Esophagus muscularis mucosa (tissue), 4 donors: ENCODE measurements at regions of chr12 and their contacts with region 1.

Region 1: DNA sequence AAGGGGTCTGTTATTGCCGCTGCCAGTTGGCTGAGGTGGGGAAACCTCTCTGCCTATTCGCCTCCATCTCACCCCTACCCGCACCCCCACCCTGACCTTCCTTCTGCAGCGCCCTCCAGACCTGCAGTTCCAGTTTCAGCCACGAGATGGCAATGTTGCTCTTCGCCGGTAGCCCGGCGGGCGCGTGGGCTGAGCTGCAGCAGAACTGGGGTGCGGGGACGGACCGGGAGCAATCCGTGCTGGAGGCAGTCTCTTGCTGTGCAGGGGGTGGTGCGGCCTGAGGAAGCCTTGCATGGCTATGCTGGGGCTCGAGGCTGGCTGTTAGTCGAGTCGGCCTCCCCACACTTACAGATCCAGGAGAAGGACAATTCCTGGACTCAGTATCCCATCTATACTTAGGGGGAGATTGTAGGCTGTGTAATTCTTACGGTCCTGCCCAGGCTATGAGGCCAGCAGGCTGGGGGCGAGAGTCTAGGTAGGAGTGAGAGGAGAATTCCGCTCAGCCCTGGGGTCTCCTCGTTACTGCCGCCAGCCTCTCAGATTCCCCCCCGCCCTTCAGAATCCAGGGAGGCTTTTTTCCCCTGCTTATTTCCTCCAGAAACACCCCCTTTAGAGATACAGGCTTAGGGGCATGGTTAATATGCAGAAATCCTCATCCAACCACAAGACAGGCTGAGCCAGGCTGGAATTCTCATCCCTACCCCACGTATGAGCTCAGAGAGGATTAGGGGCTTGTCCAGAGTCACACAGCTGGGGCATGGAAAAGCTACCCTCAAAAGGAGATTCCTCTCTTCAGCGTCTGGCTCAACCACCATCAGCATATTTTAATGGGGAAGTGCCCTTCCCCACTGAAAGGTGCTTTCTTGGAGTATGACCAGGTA is 118.2 kb downstream of the AACS start:
- DNase-seq: peak; percentile 93
- H3K4me3 ChIP-seq: no peak overlapping the region
- H3K27ac ChIP-seq: no peak overlapping the region
- H3K4me1 ChIP-seq: peaks cover 20 to 39% (median 33%) of the 10 kb centered on the region in 4 donors
- H3K27me3 ChIP-seq: peaks cover 3 to 74% (median 14%) of the 10 kb centered on the region in 4 donors
- CTCF ChIP-seq: peak in 2 of 3 experiments; percentile 96 to 98
- EP300 ChIP-seq: no peak
- POLR2A ChIP-seq: no peak

Region 2: GRCh38 chr12:124940549-124941527 is 242.6 kb before region 1 on chr12:
- intact Hi-C with region 1: no loop called
- DNase-seq: peak; percentile 98
- H3K4me3 ChIP-seq: peak overlapping the region; percentile 53 to 67 (median 56)
- H3K27ac ChIP-seq: peak overlapping the region; percentile 89 to 98 (median 92)
- H3K4me1 ChIP-seq: peaks cover 32 to 40% (median 38%) of the 10 kb centered on the region in 4 donors
- H3K27me3 ChIP-seq: no peaks in the 10 kb centered on the region
- CTCF ChIP-seq: peak; percentile 96 to 98 (median 96)
- EP300 ChIP-seq: no peak
- POLR2A ChIP-seq: no peak

Region 3: GRCh38 chr12:125402874-125403789 is 219.7 kb after region 1 on chr12:
- intact Hi-C with region 1: loop called (anchors 5 kb)
- DNase-seq: no peak
- H3K4me3 ChIP-seq: no peak overlapping the region
- H3K27ac ChIP-seq: no peak overlapping the region
- H3K4me1 ChIP-seq: no peaks in the 10 kb centered on the region
- H3K27me3 ChIP-seq: peaks cover 0 to 33% (median 2%) of the 10 kb centered on the region in 4 donors
- CTCF ChIP-seq: peak; percentile 11 to 32 (median 26)
- EP300 ChIP-seq: no peak
- POLR2A ChIP-seq: no peak

Region 4: DNA sequence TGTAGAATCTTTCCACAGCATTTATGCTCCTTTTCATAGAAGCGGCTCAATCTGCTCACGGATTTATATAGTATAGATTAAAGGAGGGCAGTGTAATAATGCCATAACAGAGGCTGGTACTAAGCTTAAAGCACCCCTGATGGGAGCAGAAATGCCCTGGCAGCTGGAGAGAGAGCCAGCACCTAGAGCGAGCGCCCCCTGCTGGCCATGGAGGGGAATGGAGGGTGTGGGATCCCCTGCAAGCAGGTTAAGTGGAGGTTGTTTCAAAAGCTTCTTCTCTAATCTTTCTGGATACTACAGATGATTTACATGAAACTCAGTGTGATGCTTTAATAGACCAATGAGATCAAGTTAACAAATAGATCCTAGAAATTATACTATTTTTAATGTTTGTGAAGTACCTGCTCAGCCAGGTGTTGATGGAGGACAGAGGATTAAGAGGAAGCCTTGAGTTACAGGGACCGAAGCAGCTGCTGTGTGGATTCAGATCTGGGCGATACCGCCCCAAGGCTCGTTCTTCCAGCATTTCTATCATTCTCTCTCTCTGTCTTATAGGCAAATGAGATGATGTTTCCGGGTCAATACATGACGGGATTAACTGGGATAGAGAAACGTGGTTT is 1564.2 kb after region 1 on chr12:
- intact Hi-C with region 1: loop called (anchors 5 kb)
- DNase-seq: no peak
- H3K4me3 ChIP-seq: no peak overlapping the region
- H3K27ac ChIP-seq: no peak overlapping the region
- H3K4me1 ChIP-seq: no peaks in the 10 kb centered on the region
- H3K27me3 ChIP-seq: peaks cover 0 to 6% (median 0%) of the 10 kb centered on the region in 4 donors
- CTCF ChIP-seq: peak; percentile 64 to 87 (median 81)
- EP300 ChIP-seq: no peak
- POLR2A ChIP-seq: no peak

Region 5: GRCh38 chr12:126874427-126875026 is 1691.1 kb after region 1 on chr12:
- intact Hi-C with region 1: loop called (anchors 5 kb)
- DNase-seq: peak; percentile 86
- H3K4me3 ChIP-seq: no peak overlapping the region
- H3K27ac ChIP-seq: no peak overlapping the region
- H3K4me1 ChIP-seq: peaks cover 0 to 3% (median 0%) of the 10 kb centered on the region in 4 donors
- H3K27me3 ChIP-seq: peaks cover 0 to 13% (median 0%) of the 10 kb centered on the region in 4 donors
- CTCF ChIP-seq: peak; percentile 60 to 85 (median 74)
- EP300 ChIP-seq: no peak
- POLR2A ChIP-seq: no peak